ENCODE measurements at regions of chr22 and their contacts with region 1.

Region 1: GRCh38 chr22:42331014-42331413 is 60.6 kb upstream of the TCF20 start:
- DNase-seq: peak; percentile 90
- H3K4me3 ChIP-seq: no peak overlapping the region
- H3K27ac ChIP-seq: no peak overlapping the region
- H3K4me1 ChIP-seq: peaks cover 19% of the 10 kb centered on the region
- H3K27me3 ChIP-seq: no peaks in the 10 kb centered on the region
- CTCF ChIP-seq: peak; percentile 50

Region 2: GRCh38 chr22:42090596-42091454 is 240.2 kb before region 1 on chr22 and contains the start of gene NDUFA6:
- CTCF ChIA-PET with region 1: no interaction called
- POLR2A ChIA-PET with region 1: interaction called, 21 read pairs
- intact Hi-C with region 1: no loop called
- DNase-seq: peak; percentile 100
- H3K4me3 ChIP-seq: peak within 1 kb of the TSS; percentile 74
- H3K27ac ChIP-seq: peak within 1 kb of the TSS; percentile 97
- H3K4me1 ChIP-seq: peaks cover 15% of the 10 kb centered on the region
- H3K27me3 ChIP-seq: no peaks in the 10 kb centered on the region
- CTCF ChIP-seq: peak; percentile 92
- total RNA-seq, gene NDUFA6: 138 and 166 TPM in 2 replicates

Region 3: DNA sequence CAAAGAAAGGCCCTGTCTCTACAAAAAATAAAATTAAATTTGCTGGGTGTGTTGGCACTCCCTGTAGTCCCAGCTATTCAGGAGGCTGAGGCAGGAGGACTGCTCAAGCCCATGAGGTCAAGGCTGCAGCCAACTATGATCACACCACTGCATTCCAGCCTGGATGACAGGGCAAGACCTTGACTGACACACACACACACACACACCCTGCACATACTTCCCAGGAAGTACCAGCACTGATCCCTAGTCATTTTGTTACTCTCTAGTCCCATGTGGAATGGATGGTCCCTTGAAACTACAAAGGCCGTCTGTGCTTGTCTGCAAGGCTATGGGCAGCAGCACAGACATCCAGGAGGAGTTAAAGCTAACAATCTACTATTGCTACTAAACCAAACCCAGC is 140.7 kb before region 1 on chr22:
- CTCF ChIA-PET with region 1: no interaction called
- POLR2A ChIA-PET with region 1: no interaction called
- intact Hi-C with region 1: no loop called
- DNase-seq: no peak
- H3K4me3 ChIP-seq: no peak overlapping the region
- H3K27ac ChIP-seq: no peak overlapping the region
- H3K4me1 ChIP-seq: peaks cover 8% of the 10 kb centered on the region
- H3K27me3 ChIP-seq: no peaks in the 10 kb centered on the region
- CTCF ChIP-seq: no peak